ENCODE measurements at regions of chr5 and their contacts with region 1.

Region 1: GRCh38 chr5:91311697-91312501 is 71.2 kb downstream of the ARRDC3 start:
- DNase-seq: peak; percentile 89
- H3K4me3 Mint-ChIP-seq: peak overlapping the region; percentile 59
- H3K27ac Mint-ChIP-seq: peak overlapping the region; percentile 80
- H3K4me1 Mint-ChIP-seq: peaks cover 37% of the 10 kb centered on the region
- H3K27me3 Mint-ChIP-seq: no peaks in the 10 kb centered on the region

Region 2: DNA sequence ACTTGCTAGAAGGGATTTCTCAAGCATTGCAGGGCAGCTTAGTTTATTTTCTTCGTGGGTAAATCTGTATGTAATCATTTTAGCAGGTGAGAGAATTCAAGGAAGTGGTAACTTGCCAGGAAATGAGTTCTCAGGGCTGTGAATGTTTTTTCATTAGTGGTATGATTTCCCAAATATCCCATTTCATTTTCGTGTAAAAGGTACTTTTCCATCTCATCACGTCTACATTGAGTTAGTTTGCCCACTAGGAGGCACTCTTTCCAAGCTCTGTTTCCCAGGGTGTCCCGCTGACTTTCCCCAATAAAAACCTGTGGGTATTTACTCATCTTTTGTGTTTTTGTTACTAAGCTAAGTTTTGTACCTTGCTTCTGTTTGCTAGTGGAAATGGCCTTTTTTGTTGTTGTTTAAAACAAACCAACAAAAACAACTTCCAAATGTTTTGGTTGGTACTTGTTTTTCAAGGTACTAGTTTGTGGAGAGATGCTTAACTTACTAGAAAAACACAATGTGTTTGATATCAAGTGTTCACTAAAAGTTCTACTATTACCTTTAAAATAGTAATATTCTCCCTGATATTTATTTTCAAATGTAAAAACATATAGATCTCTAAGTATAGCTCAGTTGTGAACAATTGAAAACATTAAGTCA is 379.7 kb before region 1 on chr5:
- intact Hi-C with region 1: no loop called
- DNase-seq: peak; percentile 78
- H3K4me3 Mint-ChIP-seq: no peak overlapping the region
- H3K27ac Mint-ChIP-seq: no peak overlapping the region
- H3K4me1 Mint-ChIP-seq: peaks cover 4% of the 10 kb centered on the region
- H3K27me3 Mint-ChIP-seq: no peaks in the 10 kb centered on the region

Region 3: GRCh38 chr5:91101600-91102379 is 210.1 kb before region 1 on chr5:
- intact Hi-C with region 1: loop called (anchors 10 kb)
- DNase-seq: peak; percentile 83
- H3K4me3 Mint-ChIP-seq: no peak overlapping the region
- H3K27ac Mint-ChIP-seq: no peak overlapping the region
- H3K4me1 Mint-ChIP-seq: peaks cover 2% of the 10 kb centered on the region
- H3K27me3 Mint-ChIP-seq: peaks cover 21% of the 10 kb centered on the region

Region 4: GRCh38 chr5:91170266-91170665 is 141.6 kb before region 1 on chr5:
- intact Hi-C with region 1: loop called (anchors 1 kb)
- DNase-seq: no peak
- H3K4me3 Mint-ChIP-seq: no peak overlapping the region
- H3K27ac Mint-ChIP-seq: peak overlapping the region; percentile 67
- H3K4me1 Mint-ChIP-seq: peaks cover 17% of the 10 kb centered on the region
- H3K27me3 Mint-ChIP-seq: no peaks in the 10 kb centered on the region

Region 5: GRCh38 chr5:91266184-91266705 is 45.7 kb before region 1 on chr5:
- intact Hi-C with region 1: loop called (anchors 1 kb)
- DNase-seq: no peak
- H3K4me3 Mint-ChIP-seq: no peak overlapping the region
- H3K27ac Mint-ChIP-seq: no peak overlapping the region
- H3K4me1 Mint-ChIP-seq: peaks cover 22% of the 10 kb centered on the region
- H3K27me3 Mint-ChIP-seq: peaks cover 19% of the 10 kb centered on the region

Region 6: DNA sequence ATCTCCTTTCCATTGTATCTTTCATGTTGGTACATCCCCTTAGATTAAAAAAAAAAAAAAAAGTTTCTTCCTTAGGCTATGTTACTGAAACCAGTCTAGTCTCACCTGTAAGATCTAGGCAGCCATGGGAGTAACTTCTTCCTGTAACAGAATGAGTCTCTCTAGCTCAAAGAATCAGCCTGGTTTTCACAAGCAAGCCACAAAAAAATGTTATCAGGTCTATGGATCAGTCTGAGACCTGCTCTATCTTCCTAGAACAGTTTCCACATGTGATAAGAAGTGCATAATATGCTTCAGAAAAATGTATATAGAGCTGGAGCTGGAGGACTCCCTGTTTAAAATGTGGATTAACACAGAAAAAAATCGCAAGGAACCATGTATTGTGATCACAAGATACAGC is 17.4 kb after region 1 on chr5:
- intact Hi-C with region 1: loop called (anchors 1 kb)
- DNase-seq: peak; percentile 64
- H3K4me3 Mint-ChIP-seq: no peak overlapping the region
- H3K27ac Mint-ChIP-seq: no peak overlapping the region
- H3K4me1 Mint-ChIP-seq: peaks cover 23% of the 10 kb centered on the region
- H3K27me3 Mint-ChIP-seq: peaks cover 12% of the 10 kb centered on the region

Region 7: DNA sequence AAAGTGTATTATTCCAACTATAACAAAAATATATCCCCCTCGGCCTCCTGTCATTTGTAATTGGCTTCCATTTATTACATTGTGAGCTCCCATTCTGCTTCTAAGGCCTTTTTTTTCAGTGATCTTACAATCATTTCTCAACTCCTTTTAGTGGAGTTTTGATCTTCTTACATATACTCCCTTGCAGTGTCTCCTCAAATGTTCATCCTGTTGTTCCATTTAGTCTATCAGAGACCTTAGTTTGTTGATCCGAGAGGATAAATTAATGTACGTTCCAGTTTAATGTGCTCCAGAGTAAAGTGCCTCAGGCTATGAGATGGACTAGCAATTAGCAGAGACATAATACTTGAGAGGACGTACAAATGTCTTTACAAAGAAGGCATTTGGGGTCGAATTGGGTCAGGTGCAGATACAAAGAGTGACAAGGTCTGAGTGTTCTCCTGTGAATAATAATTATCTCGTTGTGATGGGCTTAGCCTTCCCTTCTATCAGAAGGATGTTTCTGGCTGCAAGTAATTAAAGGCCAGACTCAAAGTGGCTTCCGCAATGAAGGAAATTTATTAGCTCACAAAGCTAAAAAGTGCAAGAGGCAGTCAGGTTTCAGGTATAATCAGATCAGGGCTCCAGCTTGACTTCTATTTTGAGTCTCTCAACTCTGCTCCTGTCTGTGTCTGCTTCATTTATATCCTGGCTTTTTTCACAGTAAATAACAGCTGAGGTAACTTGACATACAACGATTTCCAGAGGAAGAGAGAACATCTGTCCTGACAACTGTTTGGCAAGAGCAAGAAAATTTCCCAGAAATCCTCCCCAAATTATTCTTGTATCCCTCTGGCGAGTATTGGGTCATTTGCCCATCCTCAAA is 41.2 kb after region 1 on chr5:
- intact Hi-C with region 1: no loop called
- DNase-seq: no peak
- H3K4me3 Mint-ChIP-seq: no peak overlapping the region
- H3K27ac Mint-ChIP-seq: no peak overlapping the region
- H3K4me1 Mint-ChIP-seq: no peaks in the 10 kb centered on the region
- H3K27me3 Mint-ChIP-seq: peaks cover 29% of the 10 kb centered on the region

Measured in activated CD4-positive, alpha-beta T cell treated with anti-CD3 and anti-CD28 coated beads, Interleukin-2, amount 10 ng/mL, durations not matched to agents 24 days and 14 days (primary cell).